Ovary (tissue), 10 donors: ENCODE measurements at regions of chr6 and their contacts with region 1.

Region 1: GRCh38 chr6:87277123-87277522 is 45.3 kb upstream of the SMIM8 start:
- DNase-seq: no peak
- H3K4me3 ChIP-seq: no peak overlapping the region
- H3K27ac ChIP-seq: no peak overlapping the region
- H3K4me1 ChIP-seq: no peaks in the 10 kb centered on the region
- H3K27me3 ChIP-seq: no peaks in the 10 kb centered on the region
- CTCF ChIP-seq: no peak
- EP300 ChIP-seq: no peak
- POLR2A ChIP-seq: no peak

Region 2: GRCh38 chr6:87373377-87373776 is 96.3 kb after region 1 on chr6:
- intact Hi-C with region 1: loop called in 1 of 4 experiments (anchors 5 kb)
- DNase-seq: no peak
- H3K4me3 ChIP-seq: no peak overlapping the region
- H3K27ac ChIP-seq: no peak overlapping the region
- H3K4me1 ChIP-seq: no peaks in the 10 kb centered on the region
- H3K27me3 ChIP-seq: no peaks in the 10 kb centered on the region
- CTCF ChIP-seq: no peak
- EP300 ChIP-seq: no peak
- POLR2A ChIP-seq: no peak

Region 3: GRCh38 chr6:87444362-87444761 is 167.2 kb after region 1 on chr6:
- intact Hi-C with region 1: loop called in 1 of 4 experiments (anchors 10 kb)
- DNase-seq: no peak
- H3K4me3 ChIP-seq: no peak overlapping the region
- H3K27ac ChIP-seq: no peak overlapping the region
- H3K4me1 ChIP-seq: no peaks in the 10 kb centered on the region
- H3K27me3 ChIP-seq: no peaks in the 10 kb centered on the region
- CTCF ChIP-seq: no peak
- EP300 ChIP-seq: no peak
- POLR2A ChIP-seq: no peak